ENCODE measurements at regions of chr9 and their contacts with region 1.

Region 1: DNA sequence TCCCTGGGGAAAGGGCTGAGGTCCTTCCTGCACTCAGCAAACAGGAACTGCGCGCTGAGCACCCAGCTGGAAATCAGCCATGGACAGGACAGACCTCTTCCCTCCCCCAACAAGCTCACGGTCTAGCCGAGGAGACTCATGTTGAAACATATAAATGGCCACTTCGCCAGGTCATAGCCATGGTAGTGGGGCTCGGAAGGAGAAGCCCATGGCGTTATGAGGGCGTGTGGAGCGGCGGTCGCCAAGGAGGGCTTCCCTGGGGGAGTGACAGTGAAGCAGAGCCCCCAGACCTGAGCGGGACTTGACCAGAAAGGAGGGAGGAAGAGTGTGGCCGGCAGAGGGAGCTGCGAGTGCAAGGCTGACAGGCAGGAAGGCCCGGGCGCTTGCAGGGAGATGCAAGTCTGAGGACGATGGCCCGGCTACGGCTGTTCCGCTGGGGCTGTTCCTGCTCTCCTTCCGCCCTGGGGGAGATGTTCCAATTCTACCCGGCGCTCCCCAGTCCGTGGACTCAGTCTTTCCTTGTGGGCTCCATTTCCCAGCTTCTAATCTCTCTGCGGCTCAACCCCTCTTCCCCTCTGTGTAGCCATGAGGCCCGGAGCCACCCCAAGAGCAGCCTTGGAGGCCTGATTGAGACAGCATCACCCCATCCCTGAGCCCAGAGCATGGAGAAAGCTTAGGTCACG is 43.9 kb upstream of the PRRC2B start:
- DNase-seq: peak; percentile 91 to 92
- ATAC-seq: peak; percentile 89 to 97 (median 94)
- H3K4me3 ChIP-seq: peak overlapping the region in 8 of 10 donors; percentile 4 to 45 (median 38)
- H3K27ac ChIP-seq: peak overlapping the region in 2 of 10 donors; percentile 20 to 24
- H3K4me1 ChIP-seq: peaks cover 4 to 12% (median 10%) of the 10 kb centered on the region in 9 donors
- H3K27me3 ChIP-seq: no peaks in the 10 kb centered on the region
- CTCF ChIP-seq: peak; percentile 72 to 95 (median 89)

Region 2: GRCh38 chr9:131478421-131478868 is 128.4 kb after region 1 on chr9:
- intact Hi-C with region 1: loop called in 7 of 10 experiments (anchors 1 to 10 kb)
- DNase-seq: peak; percentile 38 to 53
- ATAC-seq: no peak
- H3K4me3 ChIP-seq: no peak overlapping the region
- H3K27ac ChIP-seq: peak overlapping the region in 1 of 10 donors; percentile 79
- H3K4me1 ChIP-seq: peaks cover 2 to 51% (median 24%) of the 10 kb centered on the region in 9 donors
- H3K27me3 ChIP-seq: no peaks in the 10 kb centered on the region
- CTCF ChIP-seq: peak; percentile 34 to 69 (median 62)

Region 3: DNA sequence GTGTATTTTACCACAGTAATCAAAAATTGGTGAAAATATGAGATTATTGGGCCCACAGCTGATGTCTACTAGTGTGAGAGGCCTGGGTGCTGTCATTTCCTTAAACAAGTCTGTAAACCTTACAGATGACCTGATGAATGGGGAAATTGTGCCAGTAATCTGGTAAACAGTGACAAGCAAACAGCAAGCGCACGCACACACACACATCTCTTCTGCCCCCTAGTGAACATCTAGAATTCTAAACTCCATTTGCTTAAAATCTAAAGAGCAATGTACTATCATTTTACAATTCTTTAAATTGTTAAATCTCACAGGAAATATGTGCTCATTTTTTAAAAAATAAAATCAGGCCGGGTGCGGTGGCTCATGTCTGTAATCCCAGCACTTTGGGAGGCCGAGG is 397.3 kb after region 1 on chr9:
- intact Hi-C with region 1: loop called (anchors 2 to 10 kb)
- DNase-seq: no peak
- ATAC-seq: peak in 5 of 8 donors; percentile 37 to 44 (median 41)
- H3K4me3 ChIP-seq: no peak overlapping the region
- H3K27ac ChIP-seq: no peak overlapping the region
- H3K4me1 ChIP-seq: peaks cover 0 to 22% (median 6%) of the 10 kb centered on the region in 9 donors
- H3K27me3 ChIP-seq: peaks cover 0 to 4% (median 0%) of the 10 kb centered on the region in 7 donors
- CTCF ChIP-seq: peak; percentile 45 to 73 (median 62)

Region 4: GRCh38 chr9:131755541-131756198 is 405.6 kb after region 1 on chr9:
- intact Hi-C with region 1: loop called in 1 of 10 experiments (anchors 5 kb)
- DNase-seq: peak; percentile 71 to 79
- ATAC-seq: peak; percentile 83 to 91 (median 87)
- H3K4me3 ChIP-seq: no peak overlapping the region
- H3K27ac ChIP-seq: no peak overlapping the region
- H3K4me1 ChIP-seq: peaks cover 0 to 5% (median 0%) of the 10 kb centered on the region in 9 donors
- H3K27me3 ChIP-seq: peaks cover 0 to 35% (median 27%) of the 10 kb centered on the region in 7 donors
- CTCF ChIP-seq: peak; percentile 39 to 85 (median 76)

Measured in heart right ventricle (tissue), 16 donors.